ENCODE measurements at regions of chr18 and their contacts with region 1.

Region 1: GRCh38 chr18:12376718-12377555 is at the start of gene AFG3L2:
- DNase-seq: peak; percentile 100
- ATAC-seq: peak; percentile 86
- H3K4me3 Mint-ChIP-seq: peak within 1 kb of the TSS; percentile 90
- H3K27ac Mint-ChIP-seq: peak within 1 kb of the TSS; percentile 95
- H3K4me1 Mint-ChIP-seq: peaks cover 48% of the 10 kb centered on the region
- H3K27me3 Mint-ChIP-seq: peaks cover 7% of the 10 kb centered on the region
- total RNA-seq, gene AFG3L2: 39.6 to 50.9 TPM

Region 2: GRCh38 chr18:12327510-12328178 is 49.3 kb before region 1 on chr18:
- CTCF ChIA-PET with region 1: interaction called, 11 read pairs
- DNase-seq: peak; percentile 85
- ATAC-seq: peak; percentile 92
- H3K4me3 Mint-ChIP-seq: no peak overlapping the region
- H3K27ac Mint-ChIP-seq: no peak overlapping the region
- H3K4me1 Mint-ChIP-seq: peaks cover 16% of the 10 kb centered on the region
- H3K27me3 Mint-ChIP-seq: no peaks in the 10 kb centered on the region

Region 3: DNA sequence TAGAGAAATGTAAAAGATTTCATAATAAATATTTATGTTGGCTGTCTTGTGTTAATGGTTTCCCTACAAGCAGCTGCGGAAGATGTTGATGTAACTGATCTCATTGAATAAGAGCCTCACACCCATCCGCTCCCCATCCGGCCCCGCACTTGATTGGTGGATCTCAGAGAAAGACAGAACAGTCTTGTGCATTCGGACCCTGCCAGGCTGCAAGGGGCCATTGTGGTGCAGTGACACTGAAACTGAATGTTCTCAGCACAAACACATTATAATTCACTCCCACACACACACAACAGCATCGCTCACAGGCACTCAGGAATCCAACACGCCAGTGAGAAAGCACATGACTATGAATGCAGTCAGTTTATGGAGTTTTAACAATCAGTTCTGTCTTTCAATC is 78.6 kb after region 1 on chr18:
- CTCF ChIA-PET with region 1: no interaction called
- DNase-seq: no peak
- ATAC-seq: no peak
- H3K4me3 Mint-ChIP-seq: no peak overlapping the region
- H3K27ac Mint-ChIP-seq: no peak overlapping the region
- H3K4me1 Mint-ChIP-seq: no peaks in the 10 kb centered on the region
- H3K27me3 Mint-ChIP-seq: no peaks in the 10 kb centered on the region

Measured in activated CD8-positive, alpha-beta memory T cell treated with anti-CD3 and anti-CD28 coated beads, Interleukin-2, amount 10 ng/mL, durations not matched to agents 7 days and 5 days (primary cell).